ENCODE measurements at regions of chr1 and their contacts with region 1.

Region 1: DNA sequence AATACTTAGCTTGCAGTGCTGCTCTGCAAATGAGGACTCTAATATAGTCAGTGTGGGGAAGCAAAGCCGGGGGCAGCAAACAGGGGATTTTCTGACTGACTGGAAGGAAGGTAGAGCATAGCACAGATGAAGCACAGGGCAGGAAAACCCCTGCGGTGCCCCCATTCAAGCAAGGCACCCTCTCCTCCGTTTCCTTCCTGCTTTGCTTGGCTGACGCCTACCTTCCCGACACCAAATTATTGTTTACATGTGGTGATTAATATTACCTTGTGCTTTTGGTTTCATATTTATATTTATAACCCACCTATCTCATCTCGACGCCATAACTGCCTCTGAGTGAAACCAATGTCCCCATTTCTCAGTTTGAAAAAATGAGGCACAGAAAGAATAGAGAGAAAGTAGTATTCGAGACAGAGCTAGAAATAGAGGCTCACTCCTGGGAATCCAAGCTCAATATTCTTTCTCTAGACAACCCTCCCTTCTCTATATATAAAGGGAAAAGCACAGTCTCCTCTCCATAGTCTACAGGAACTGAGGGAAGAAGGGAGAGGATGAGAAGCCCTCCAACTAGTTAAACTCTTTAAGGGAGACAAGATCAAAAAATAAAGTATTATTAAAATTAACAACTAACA is 41.3 kb downstream of the PIK3C2B start:
- DNase-seq: peak; percentile 54
- ATAC-seq: peak; percentile 90
- H3K4me3 Mint-ChIP-seq: peak overlapping the region; percentile 69
- H3K27ac Mint-ChIP-seq: peak overlapping the region; percentile 88
- H3K4me1 Mint-ChIP-seq: peaks cover 96% of the 10 kb centered on the region
- H3K27me3 Mint-ChIP-seq: no peaks in the 10 kb centered on the region
- CTCF ChIP-seq: no peak

Region 2: DNA sequence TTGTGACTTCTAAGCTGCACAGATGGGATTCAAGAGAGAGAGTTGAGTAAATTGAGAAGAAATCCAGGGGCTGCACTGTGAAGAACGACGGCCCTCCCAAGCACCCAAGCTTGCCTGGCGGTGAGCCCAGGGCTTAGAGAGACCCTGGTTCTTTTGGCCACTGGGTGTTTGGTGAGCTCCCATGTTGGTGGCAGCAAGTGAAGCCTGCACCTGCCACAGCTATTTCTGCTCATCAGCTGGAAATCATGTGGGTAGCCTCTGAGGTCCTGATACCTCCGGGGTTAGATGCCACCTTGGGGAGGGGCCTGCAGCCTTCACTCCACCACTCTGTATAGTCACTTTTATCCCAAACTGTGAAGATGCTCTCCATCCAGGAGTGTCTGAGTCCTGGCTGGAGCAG is 1154.1 kb before region 1 on chr1:
- CTCF ChIA-PET with region 1: no interaction called
- POLR2A ChIA-PET with region 1: interaction called, 12 read pairs
- intact Hi-C with region 1: no loop called
- DNase-seq: no peak
- ATAC-seq: peak; percentile 70
- H3K4me3 Mint-ChIP-seq: peak overlapping the region; percentile 61
- H3K27ac Mint-ChIP-seq: peak overlapping the region; percentile 91
- H3K4me1 Mint-ChIP-seq: peaks cover 95% of the 10 kb centered on the region
- H3K27me3 Mint-ChIP-seq: no peaks in the 10 kb centered on the region
- CTCF ChIP-seq: no peak

Region 3: GRCh38 chr1:203823306-203823705 is 630.0 kb before region 1 on chr1:
- CTCF ChIA-PET with region 1: no interaction called
- POLR2A ChIA-PET with region 1: no interaction called
- intact Hi-C with region 1: no loop called
- DNase-seq: no peak
- ATAC-seq: no peak
- H3K4me3 Mint-ChIP-seq: no peak overlapping the region
- H3K27ac Mint-ChIP-seq: no peak overlapping the region
- H3K4me1 Mint-ChIP-seq: peaks cover 4% of the 10 kb centered on the region
- H3K27me3 Mint-ChIP-seq: no peaks in the 10 kb centered on the region
- CTCF ChIP-seq: no peak

Region 4: GRCh38 chr1:204207136-204207616 is 246.1 kb before region 1 on chr1:
- CTCF ChIA-PET with region 1: no interaction called
- POLR2A ChIA-PET with region 1: no interaction called
- intact Hi-C with region 1: no loop called
- DNase-seq: peak; percentile 62
- ATAC-seq: peak; percentile 88
- H3K4me3 Mint-ChIP-seq: no peak overlapping the region
- H3K27ac Mint-ChIP-seq: no peak overlapping the region
- H3K4me1 Mint-ChIP-seq: no peaks in the 10 kb centered on the region
- H3K27me3 Mint-ChIP-seq: peaks cover 23% of the 10 kb centered on the region
- CTCF ChIP-seq: no peak

Region 5: GRCh38 chr1:204411451-204412204 is 41.6 kb before region 1 on chr1 and contains the start of gene PPP1R15B:
- CTCF ChIA-PET with region 1: interaction called, 3 read pairs
- POLR2A ChIA-PET with region 1: interaction called, 3 read pairs
- intact Hi-C with region 1: loop called (anchors 1 kb)
- DNase-seq: peak; percentile 96
- ATAC-seq: peak; percentile 89
- H3K4me3 Mint-ChIP-seq: peak within 1 kb of the TSS; percentile 99
- H3K27ac Mint-ChIP-seq: peak within 1 kb of the TSS; percentile 99
- H3K4me1 Mint-ChIP-seq: peaks cover 29% of the 10 kb centered on the region
- H3K27me3 Mint-ChIP-seq: no peaks in the 10 kb centered on the region
- CTCF ChIP-seq: no peak
- total RNA-seq, gene PPP1R15B: 60.4 and 70.6 TPM in 2 replicates

Region 6: GRCh38 chr1:204465546-204466415 is 12.5 kb after region 1 on chr1:
- CTCF ChIA-PET with region 1: interaction called, 40 read pairs
- POLR2A ChIA-PET with region 1: interaction called, 40 read pairs
- intact Hi-C with region 1: loop called (anchors 1 kb)
- DNase-seq: peak; percentile 49
- ATAC-seq: peak; percentile 53
- H3K4me3 Mint-ChIP-seq: peak overlapping the region; percentile 52
- H3K27ac Mint-ChIP-seq: peak overlapping the region; percentile 94
- H3K4me1 Mint-ChIP-seq: peaks cover 85% of the 10 kb centered on the region
- H3K27me3 Mint-ChIP-seq: no peaks in the 10 kb centered on the region
- CTCF ChIP-seq: no peak

Region 7: GRCh38 chr1:204480515-204480914 is 27.3 kb after region 1 on chr1:
- CTCF ChIA-PET with region 1: interaction called, 85 read pairs
- POLR2A ChIA-PET with region 1: interaction called, 128 read pairs
- intact Hi-C with region 1: loop called (anchors 1 kb)
- DNase-seq: peak; percentile 40
- ATAC-seq: peak; percentile 57
- H3K4me3 Mint-ChIP-seq: peak overlapping the region; percentile 76
- H3K27ac Mint-ChIP-seq: peak overlapping the region; percentile 98
- H3K4me1 Mint-ChIP-seq: peaks cover 98% of the 10 kb centered on the region
- H3K27me3 Mint-ChIP-seq: no peaks in the 10 kb centered on the region
- CTCF ChIP-seq: no peak

Region 8: GRCh38 chr1:204494281-204495077 is 41.2 kb after region 1 on chr1 and contains the start of gene PIK3C2B:
- CTCF ChIA-PET with region 1: interaction called, 1,006 read pairs
- POLR2A ChIA-PET with region 1: interaction called, 413 read pairs
- intact Hi-C with region 1: loop called (anchors 1 kb)
- DNase-seq: peak; percentile 71
- ATAC-seq: peak; percentile 75
- H3K4me3 Mint-ChIP-seq: peak within 1 kb of the TSS; percentile 97
- H3K27ac Mint-ChIP-seq: peak within 1 kb of the TSS; percentile 97
- H3K4me1 Mint-ChIP-seq: peaks cover 80% of the 10 kb centered on the region
- H3K27me3 Mint-ChIP-seq: no peaks in the 10 kb centered on the region
- CTCF ChIP-seq: no peak
- total RNA-seq, gene PIK3C2B: 127 and 151 TPM in 2 replicates